GM12878 (cell line): ENCODE measurements at regions of chr19 and their contacts with region 1.

Region 1: GRCh38 chr19:54390942-54391577 is 24.2 kb upstream of the TTYH1 start:
- DNase-seq: no peak
- ATAC-seq: peak; percentile 31
- H3K4me3 ChIP-seq: no peak overlapping the region
- H3K27ac ChIP-seq: no peak overlapping the region
- H3K4me1 ChIP-seq: peaks cover 9% of the 10 kb centered on the region
- H3K27me3 ChIP-seq: no peaks in the 10 kb centered on the region
- CTCF ChIP-seq: peak; percentile 66 to 73 (median 72)
- EP300 ChIP-seq: no peak
- POLR2A ChIP-seq: no peak
- RAD21 ChIP-seq: peak; percentile 74

Region 2: GRCh38 chr19:54189735-54190502 is 201.1 kb before region 1 on chr19:
- CTCF ChIA-PET with region 1: interaction called, 21 read pairs
- POLR2A ChIA-PET with region 1: interaction called, 5 read pairs
- RAD21 ChIA-PET with region 1: interaction called, 9 read pairs
- SMC1A ChIA-PET with region 1: no interaction called
- in situ Hi-C with region 1: no loop called
- intact Hi-C with region 1: no loop called
- DNase-seq: peak; percentile 97
- ATAC-seq: peak; percentile 73
- H3K4me3 ChIP-seq: peak overlapping the region; percentile 62
- H3K27ac ChIP-seq: peak overlapping the region; percentile 99
- H3K4me1 ChIP-seq: peaks cover 14% of the 10 kb centered on the region
- H3K27me3 ChIP-seq: no peaks in the 10 kb centered on the region
- CTCF ChIP-seq: no peak
- EP300 ChIP-seq: no peak; a peak in 1 of 4 replicates
- POLR2A ChIP-seq: peak; percentile 90
- RAD21 ChIP-seq: no peak

Region 3: DNA sequence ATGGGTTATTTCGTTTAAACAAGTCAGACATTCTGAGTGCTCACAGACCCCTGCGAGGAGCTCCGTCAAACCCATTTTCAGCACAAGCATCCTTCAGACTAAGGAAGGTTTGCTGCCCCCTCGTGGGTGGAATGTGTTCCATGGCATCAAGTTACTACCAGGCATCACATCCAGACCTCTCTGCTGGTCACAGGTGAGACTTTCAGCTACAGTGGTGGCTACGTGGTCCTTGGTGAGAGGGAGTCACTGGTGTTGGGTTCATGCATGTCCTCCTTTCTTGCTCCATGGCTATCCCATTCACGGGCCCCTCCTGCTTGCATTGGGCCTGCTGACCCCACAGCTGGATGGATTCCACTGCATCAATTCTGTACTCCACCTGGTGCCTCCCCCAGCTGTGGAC is 124.9 kb before region 1 on chr19:
- CTCF ChIA-PET with region 1: interaction called, 60 read pairs
- POLR2A ChIA-PET with region 1: no interaction called
- RAD21 ChIA-PET with region 1: interaction called, 22 read pairs
- SMC1A ChIA-PET with region 1: interaction called, 27 read pairs
- in situ Hi-C with region 1: no loop called
- intact Hi-C with region 1: no loop called
- DNase-seq: peak; percentile 19
- ATAC-seq: peak; percentile 90
- H3K4me3 ChIP-seq: no peak overlapping the region
- H3K27ac ChIP-seq: no peak overlapping the region
- H3K4me1 ChIP-seq: no peaks in the 10 kb centered on the region
- H3K27me3 ChIP-seq: peaks cover 0 to 3% of the 10 kb centered on the region in 2 experiments; a peak in 1 of 4 replicates
- CTCF ChIP-seq: peak; percentile 75 to 87 (median 77)
- EP300 ChIP-seq: no peak
- POLR2A ChIP-seq: no peak
- RAD21 ChIP-seq: peak; percentile 58; the same call in 1 of the 2 replicates

Region 4: GRCh38 chr19:54325194-54325621 is 65.9 kb before region 1 on chr19:
- CTCF ChIA-PET with region 1: interaction called, 205 read pairs
- POLR2A ChIA-PET with region 1: interaction called, 5 read pairs
- RAD21 ChIA-PET with region 1: interaction called, 94 read pairs
- SMC1A ChIA-PET with region 1: interaction called, 116 read pairs
- in situ Hi-C with region 1: loop called (anchors 5 kb)
- intact Hi-C with region 1: loop called (anchors 1 kb)
- DNase-seq: no peak
- ATAC-seq: peak; percentile 81
- H3K4me3 ChIP-seq: no peak overlapping the region
- H3K27ac ChIP-seq: no peak overlapping the region
- H3K4me1 ChIP-seq: no peaks in the 10 kb centered on the region
- H3K27me3 ChIP-seq: no peaks in the 10 kb centered on the region
- CTCF ChIP-seq: peak; percentile 73 to 81 (median 79)
- EP300 ChIP-seq: no peak
- POLR2A ChIP-seq: no peak
- RAD21 ChIP-seq: peak; percentile 72

Region 5: DNA sequence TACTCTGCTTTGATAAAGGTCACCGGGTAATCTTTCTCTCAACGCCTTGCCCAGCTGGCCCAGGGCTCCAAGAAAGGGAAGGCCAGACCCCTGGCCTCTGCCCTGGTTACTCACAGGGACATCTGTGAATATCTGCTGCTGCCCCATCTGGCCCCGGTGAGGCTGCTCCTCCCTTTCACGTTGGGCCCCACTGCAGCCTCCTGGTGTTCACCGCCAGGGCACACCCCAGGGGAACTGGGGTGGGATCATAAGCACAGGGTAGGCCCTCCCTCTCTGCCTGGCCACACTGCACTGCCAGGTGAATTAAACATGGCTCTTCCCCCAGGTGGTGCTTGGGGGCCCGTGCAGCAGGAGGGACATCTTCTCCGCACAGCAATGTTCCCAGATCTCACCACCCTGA is 39.0 kb before region 1 on chr19:
- CTCF ChIA-PET with region 1: interaction called, 56 read pairs
- POLR2A ChIA-PET with region 1: interaction called, 3 read pairs
- RAD21 ChIA-PET with region 1: interaction called, 26 read pairs
- SMC1A ChIA-PET with region 1: interaction called, 31 read pairs
- in situ Hi-C with region 1: no loop called
- intact Hi-C with region 1: loop called (anchors 5 kb)
- DNase-seq: no peak
- ATAC-seq: peak; percentile 59
- H3K4me3 ChIP-seq: no peak overlapping the region
- H3K27ac ChIP-seq: no peak overlapping the region
- H3K4me1 ChIP-seq: no peaks in the 10 kb centered on the region
- H3K27me3 ChIP-seq: no peaks in the 10 kb centered on the region
- CTCF ChIP-seq: no peak
- EP300 ChIP-seq: no peak
- POLR2A ChIP-seq: no peak
- RAD21 ChIP-seq: no peak

Region 6: DNA sequence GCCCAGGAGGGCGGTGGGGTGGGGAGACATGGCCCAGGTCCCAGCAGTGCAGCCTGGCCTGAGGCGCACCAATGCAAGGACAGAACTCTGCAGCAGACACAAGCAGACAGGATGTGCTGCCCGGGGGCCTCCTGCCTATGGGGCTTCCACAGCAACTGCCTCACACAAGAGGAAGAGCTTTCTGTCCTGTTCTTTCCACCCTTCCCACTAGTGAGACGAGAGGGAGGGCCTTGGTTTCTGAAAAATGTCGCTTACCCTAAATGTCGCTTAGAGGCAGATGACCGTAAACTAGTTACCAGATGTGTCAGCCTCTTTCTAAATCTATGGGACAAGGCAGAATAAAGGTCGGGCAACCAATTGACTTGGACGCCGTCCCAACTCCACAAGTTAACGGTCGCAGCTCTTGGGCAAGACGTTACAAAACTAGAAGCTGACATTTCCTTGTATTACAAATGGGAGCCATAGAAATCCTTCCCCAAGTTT is 26.2 kb before region 1 on chr19 and contains the start of gene LAIR1:
- CTCF ChIA-PET with region 1: interaction called, 68 read pairs
- POLR2A ChIA-PET with region 1: interaction called, 10 read pairs
- RAD21 ChIA-PET with region 1: interaction called, 32 read pairs
- SMC1A ChIA-PET with region 1: interaction called, 12 read pairs
- in situ Hi-C with region 1: no loop called
- intact Hi-C with region 1: loop called (anchors 2 kb)
- DNase-seq: no peak
- ATAC-seq: peak; percentile 85
- H3K4me3 ChIP-seq: no peak within 1 kb of the TSS
- H3K27ac ChIP-seq: no peak within 1 kb of the TSS
- H3K4me1 ChIP-seq: no peaks in the 10 kb centered on the region
- H3K27me3 ChIP-seq: peaks cover 0 to 7% of the 10 kb centered on the region in 2 experiments; a peak in 1 of 4 replicates
- CTCF ChIP-seq: no peak
- EP300 ChIP-seq: no peak
- POLR2A ChIP-seq: no peak; the same call in 1 of the 2 replicates
- RAD21 ChIP-seq: no peak
- polyA plus RNA-seq, gene LAIR1: 8.6 to 13.1 TPM

Region 7: DNA sequence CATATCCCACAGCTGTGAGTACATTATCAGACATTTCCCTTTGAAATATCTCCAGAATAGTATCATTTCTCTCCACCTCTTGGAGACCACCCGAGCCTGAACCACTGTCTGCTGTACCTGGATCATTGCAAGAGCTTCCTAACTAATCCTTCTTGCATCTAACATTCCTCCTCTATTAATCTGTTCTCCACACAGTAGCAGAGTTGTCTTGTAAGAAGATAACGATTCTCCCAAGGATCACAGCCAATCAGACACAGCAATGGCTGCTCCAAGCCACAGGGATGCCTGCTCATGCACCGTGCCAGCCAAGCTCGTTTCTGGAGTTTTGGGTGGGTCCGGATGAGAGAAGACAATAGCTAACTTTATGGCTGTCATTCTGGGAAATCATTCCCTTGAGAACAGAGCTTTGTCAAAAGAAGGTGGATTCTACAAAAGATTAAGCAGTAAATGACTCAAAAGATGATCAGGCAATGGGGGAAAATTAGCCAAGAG is 11.8 kb before region 1 on chr19:
- CTCF ChIA-PET with region 1: interaction called, 16 read pairs
- POLR2A ChIA-PET with region 1: interaction called, 16 read pairs
- RAD21 ChIA-PET with region 1: interaction called, 24 read pairs
- SMC1A ChIA-PET with region 1: interaction called, 25 read pairs
- in situ Hi-C with region 1: no loop called
- intact Hi-C with region 1: no loop called
- DNase-seq: no peak
- ATAC-seq: no peak
- H3K4me3 ChIP-seq: no peak overlapping the region
- H3K27ac ChIP-seq: no peak overlapping the region
- H3K4me1 ChIP-seq: peaks cover 8% of the 10 kb centered on the region
- H3K27me3 ChIP-seq: no peaks in the 10 kb centered on the region
- CTCF ChIP-seq: no peak
- EP300 ChIP-seq: no peak
- POLR2A ChIP-seq: no peak
- RAD21 ChIP-seq: no peak

Region 8: GRCh38 chr19:54561840-54562239 is 170.8 kb after region 1 on chr19:
- CTCF ChIA-PET with region 1: no interaction called
- POLR2A ChIA-PET with region 1: no interaction called
- RAD21 ChIA-PET with region 1: no interaction called
- SMC1A ChIA-PET with region 1: no interaction called
- in situ Hi-C with region 1: no loop called
- intact Hi-C with region 1: no loop called
- DNase-seq: no peak
- ATAC-seq: no peak
- H3K4me3 ChIP-seq: no peak overlapping the region
- H3K27ac ChIP-seq: no peak overlapping the region
- H3K4me1 ChIP-seq: no peaks in the 10 kb centered on the region
- H3K27me3 ChIP-seq: no peaks in the 10 kb centered on the region; a peak in 2 of 4 replicates
- CTCF ChIP-seq: no peak
- EP300 ChIP-seq: no peak
- POLR2A ChIP-seq: no peak
- RAD21 ChIP-seq: no peak